Heart right ventricle (tissue), 16 donors: ENCODE measurements at regions of chr20 and their contacts with region 1.

Region 1: GRCh38 chr20:12570371-12570770 is 438.4 kb upstream of the SPTLC3 start:
- DNase-seq: no peak
- ATAC-seq: no peak
- H3K4me3 ChIP-seq: no peak overlapping the region
- H3K27ac ChIP-seq: no peak overlapping the region
- H3K4me1 ChIP-seq: peaks cover 0 to 8% (median 0%) of the 10 kb centered on the region in 9 donors
- H3K27me3 ChIP-seq: no peaks in the 10 kb centered on the region
- CTCF ChIP-seq: peak in 3 of 9 donors; percentile 4 to 39 (median 26)

Region 2: GRCh38 chr20:11917663-11918062 is 652.7 kb before region 1 on chr20 and contains the start of gene BTBD3:
- intact Hi-C with region 1: loop called in 1 of 10 experiments (anchors 10 kb)
- DNase-seq: peak; percentile 37 to 83
- ATAC-seq: peak; percentile 94 to 97 (median 96)
- H3K4me3 ChIP-seq: peak within 1 kb of the TSS; percentile 4 to 62 (median 45)
- H3K27ac ChIP-seq: peak within 1 kb of the TSS; percentile 39 to 88 (median 62)
- H3K4me1 ChIP-seq: peaks cover 4 to 88% (median 68%) of the 10 kb centered on the region in 9 donors
- H3K27me3 ChIP-seq: no peaks in the 10 kb centered on the region
- CTCF ChIP-seq: peak in 6 of 9 donors; percentile 10 to 51 (median 24)
- total RNA-seq, gene BTBD3: 21.4 to 29.8 (median 23.8) TPM

Region 3: DNA sequence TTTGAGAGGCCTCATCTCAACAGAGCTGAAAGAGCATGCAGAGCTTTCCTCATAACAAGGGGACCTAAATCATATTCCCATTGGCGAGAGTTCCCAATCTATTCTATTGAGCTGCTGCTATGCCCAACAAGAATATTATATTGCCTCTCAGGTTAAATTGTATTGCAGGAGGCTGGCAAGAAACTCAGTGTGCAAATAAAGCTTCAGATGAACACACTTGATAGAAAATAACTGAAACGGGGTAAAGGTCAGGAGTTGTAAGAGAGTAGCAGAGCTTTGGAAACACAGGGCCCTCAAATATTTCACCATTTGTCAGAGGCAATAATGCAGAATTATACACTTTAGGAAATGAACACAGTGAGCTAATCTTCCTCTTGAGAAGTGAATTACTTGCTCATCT is 74.1 kb after region 1 on chr20:
- intact Hi-C with region 1: no loop called
- DNase-seq: no peak
- ATAC-seq: no peak
- H3K4me3 ChIP-seq: no peak overlapping the region
- H3K27ac ChIP-seq: no peak overlapping the region
- H3K4me1 ChIP-seq: no peaks in the 10 kb centered on the region
- H3K27me3 ChIP-seq: no peaks in the 10 kb centered on the region
- CTCF ChIP-seq: no peak

Region 4: DNA sequence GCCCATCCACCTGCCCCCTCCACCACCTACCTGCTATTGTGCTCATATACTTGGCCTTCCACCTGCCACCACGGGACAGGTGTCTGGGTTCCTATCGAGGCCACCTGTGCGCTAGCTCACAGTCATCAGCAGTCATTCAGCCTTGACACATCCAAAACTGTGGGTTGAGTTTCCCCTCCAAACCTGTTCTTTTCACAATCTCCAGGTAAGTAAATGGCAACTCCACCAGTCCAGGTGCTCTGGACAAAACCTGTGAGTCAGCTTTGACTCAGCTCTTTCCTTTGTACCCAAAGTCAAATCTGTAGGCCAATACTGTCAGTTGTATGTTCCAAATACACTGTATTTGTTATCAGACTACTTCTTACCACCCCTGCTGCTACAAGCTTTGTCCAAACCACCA is 491.0 kb after region 1 on chr20:
- intact Hi-C with region 1: no loop called
- DNase-seq: no peak
- ATAC-seq: no peak
- H3K4me3 ChIP-seq: no peak overlapping the region
- H3K27ac ChIP-seq: no peak overlapping the region
- H3K4me1 ChIP-seq: peaks cover 0 to 21% (median 0%) of the 10 kb centered on the region in 9 donors
- H3K27me3 ChIP-seq: no peaks in the 10 kb centered on the region
- CTCF ChIP-seq: no peak